ENCODE measurements at regions of chr9 and their contacts with region 1.

Region 1: GRCh38 chr9:99057665-99058625 is 47.0 kb upstream of the TGFBR1 start:
- DNase-seq: peak; percentile 41 to 91 (median 79)
- ATAC-seq: peak; percentile 67
- H3K4me3 ChIP-seq: peak overlapping the region; percentile 49
- H3K4me3 Mint-ChIP-seq: peak overlapping the region; percentile 85
- H3K27ac ChIP-seq: peak overlapping the region in 1 of 2 experiments; percentile 78
- H3K27ac Mint-ChIP-seq: peak overlapping the region; percentile 85
- H3K4me1 ChIP-seq: peaks cover 65% of the 10 kb centered on the region
- H3K4me1 Mint-ChIP-seq: peaks cover 85% of the 10 kb centered on the region
- H3K27me3 ChIP-seq: no peaks in the 10 kb centered on the region
- H3K27me3 Mint-ChIP-seq: no peaks in the 10 kb centered on the region
- CTCF ChIP-seq: no peak

Region 2: DNA sequence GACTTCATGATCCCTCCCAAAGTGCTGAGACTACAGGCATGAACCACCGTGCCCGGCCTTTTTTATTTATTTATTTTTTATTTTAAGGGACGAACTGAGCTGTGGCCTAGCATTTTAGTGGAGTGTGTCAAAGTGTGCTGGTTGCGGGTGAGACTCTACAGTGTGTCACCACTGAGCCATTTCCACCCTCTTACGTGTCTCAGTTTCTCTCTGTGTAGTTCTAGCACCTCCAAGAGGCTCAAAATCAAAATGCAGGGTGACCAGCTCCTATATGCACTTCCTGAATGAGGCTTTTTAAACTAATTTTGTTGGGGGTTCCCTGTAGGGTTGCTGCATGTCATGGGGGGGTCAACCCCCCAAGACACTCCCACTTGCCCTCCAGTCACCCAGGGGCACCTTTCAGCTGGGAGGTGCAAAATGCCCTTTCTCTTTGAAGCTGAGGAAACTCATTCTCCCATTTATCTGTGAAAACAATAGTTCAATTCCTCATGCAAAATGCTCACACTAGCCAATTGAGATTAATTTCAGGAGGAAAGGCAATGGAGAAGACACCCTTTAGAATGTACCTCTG is 44.9 kb before region 1 on chr9:
- CTCF ChIA-PET with region 1: interaction called, 9 read pairs
- POLR2A ChIA-PET with region 1: interaction called, 9 read pairs
- intact Hi-C with region 1: loop called in 1 of 2 experiments (anchors 5 kb)
- DNase-seq: peak in 4 of 9 experiments; percentile 25 to 68 (median 52)
- ATAC-seq: peak; percentile 73
- H3K4me3 ChIP-seq: peak overlapping the region in 1 of 2 experiments; percentile 24
- H3K4me3 Mint-ChIP-seq: peak overlapping the region; percentile 74
- H3K27ac ChIP-seq: peak overlapping the region; percentile 35 to 81
- H3K27ac Mint-ChIP-seq: peak overlapping the region; percentile 95
- H3K4me1 ChIP-seq: peaks cover 20% of the 10 kb centered on the region
- H3K4me1 Mint-ChIP-seq: peaks cover 32% of the 10 kb centered on the region
- H3K27me3 ChIP-seq: no peaks in the 10 kb centered on the region
- H3K27me3 Mint-ChIP-seq: no peaks in the 10 kb centered on the region
- CTCF ChIP-seq: peak; percentile 42

Region 3: GRCh38 chr9:99076483-99077171 is 18.7 kb after region 1 on chr9:
- CTCF ChIA-PET with region 1: interaction called, 3 read pairs
- POLR2A ChIA-PET with region 1: interaction called, 19 read pairs
- intact Hi-C with region 1: loop called (anchors 1 kb)
- DNase-seq: peak in 8 of 9 experiments; percentile 46 to 85 (median 64)
- ATAC-seq: peak; percentile 98
- H3K4me3 ChIP-seq: no peak overlapping the region
- H3K4me3 Mint-ChIP-seq: peak overlapping the region; percentile 33
- H3K27ac ChIP-seq: peak overlapping the region in 1 of 2 experiments; percentile 47
- H3K27ac Mint-ChIP-seq: peak overlapping the region; percentile 84
- H3K4me1 ChIP-seq: peaks cover 23% of the 10 kb centered on the region
- H3K4me1 Mint-ChIP-seq: peaks cover 54% of the 10 kb centered on the region
- H3K27me3 ChIP-seq: no peaks in the 10 kb centered on the region
- H3K27me3 Mint-ChIP-seq: no peaks in the 10 kb centered on the region
- CTCF ChIP-seq: no peak

Region 4: DNA sequence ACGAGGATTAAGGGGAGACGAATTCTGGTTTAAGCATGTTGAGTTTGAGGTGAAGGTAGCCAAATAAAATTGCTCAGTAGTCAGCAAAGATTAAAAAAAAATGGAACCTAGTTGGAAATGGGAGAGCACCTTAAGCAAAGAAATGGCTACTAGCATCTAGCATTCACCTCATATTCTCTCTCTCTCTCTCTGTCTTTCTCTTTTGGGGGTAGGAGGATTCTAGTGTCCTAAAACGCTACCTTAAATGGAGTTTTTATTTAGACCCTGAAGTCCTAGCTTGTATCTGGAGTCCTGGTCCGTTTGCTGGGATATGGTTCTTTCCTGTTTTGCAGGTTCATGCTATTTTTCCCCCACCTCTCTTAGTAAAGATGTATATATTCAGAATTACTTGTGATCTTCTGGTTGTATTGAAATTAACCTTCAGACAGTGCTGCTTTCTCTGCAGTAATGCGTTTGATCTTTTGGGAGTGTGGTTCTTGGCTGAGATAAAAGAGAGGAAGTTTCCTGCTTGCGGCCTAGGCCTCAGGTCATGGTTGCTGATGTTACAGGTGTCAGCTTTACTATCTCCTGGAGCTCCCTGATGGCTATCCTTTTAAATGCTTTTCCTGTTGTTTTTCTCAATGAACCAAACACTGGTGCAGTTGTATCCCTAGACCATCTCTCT is 54.9 kb after region 1 on chr9:
- CTCF ChIA-PET with region 1: interaction called, 3 read pairs
- POLR2A ChIA-PET with region 1: interaction called, 8 read pairs
- intact Hi-C with region 1: loop called (anchors 2 to 5 kb)
- DNase-seq: peak in 5 of 9 experiments; percentile 45 to 87 (median 69)
- ATAC-seq: peak; percentile 92
- H3K4me3 ChIP-seq: peak overlapping the region in 1 of 2 experiments; percentile 10
- H3K4me3 Mint-ChIP-seq: peak overlapping the region; percentile 66
- H3K27ac ChIP-seq: peak overlapping the region; percentile 6 to 41
- H3K27ac Mint-ChIP-seq: peak overlapping the region; percentile 88
- H3K4me1 ChIP-seq: peaks cover 85% of the 10 kb centered on the region
- H3K4me1 Mint-ChIP-seq: peaks cover 93% of the 10 kb centered on the region
- H3K27me3 ChIP-seq: no peaks in the 10 kb centered on the region
- H3K27me3 Mint-ChIP-seq: no peaks in the 10 kb centered on the region
- CTCF ChIP-seq: no peak

Region 5: DNA sequence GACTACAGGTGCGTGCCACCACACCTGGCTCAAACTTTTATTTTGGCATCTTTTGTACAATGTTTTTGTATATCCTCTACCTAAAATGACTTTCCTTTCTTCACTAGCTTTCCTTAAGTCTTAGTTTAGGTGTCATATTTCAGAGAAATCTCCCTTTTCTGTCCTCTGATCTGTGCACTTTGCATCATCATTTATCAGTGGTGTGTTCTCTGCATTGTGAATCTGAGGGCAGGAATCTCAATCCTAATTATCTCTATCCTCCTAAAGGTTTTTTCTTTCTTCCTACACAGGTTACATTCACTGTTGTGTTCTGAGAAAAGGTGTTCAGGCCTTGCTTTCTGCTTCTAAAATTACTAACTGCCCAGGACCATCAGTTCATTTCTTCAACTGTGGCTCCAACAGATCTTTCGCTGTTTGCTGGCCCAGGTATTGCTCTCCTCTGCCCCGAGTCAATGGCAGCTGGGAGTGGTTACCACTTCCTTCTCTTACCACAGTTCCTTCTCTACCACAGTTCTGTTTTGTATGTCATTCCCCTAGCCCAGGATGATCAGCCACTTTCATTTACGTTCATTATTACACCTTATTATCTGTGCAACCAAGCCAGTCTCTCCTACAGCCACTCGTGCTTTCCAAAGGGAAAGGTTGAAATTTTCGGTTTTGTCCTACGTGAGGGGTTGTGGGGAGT is 61.0 kb after region 1 on chr9:
- CTCF ChIA-PET with region 1: interaction called, 4 read pairs
- POLR2A ChIA-PET with region 1: interaction called, 4 read pairs
- intact Hi-C with region 1: loop called in 1 of 2 experiments (anchors 5 kb)
- DNase-seq: peak in 8 of 9 experiments; percentile 32 to 83 (median 62)
- ATAC-seq: peak; percentile 96
- H3K4me3 ChIP-seq: peak overlapping the region; percentile 15 to 36
- H3K4me3 Mint-ChIP-seq: peak overlapping the region; percentile 61
- H3K27ac ChIP-seq: peak overlapping the region; percentile 28 to 38
- H3K27ac Mint-ChIP-seq: peak overlapping the region; percentile 83
- H3K4me1 ChIP-seq: peaks cover 86% of the 10 kb centered on the region
- H3K4me1 Mint-ChIP-seq: peaks cover 91% of the 10 kb centered on the region
- H3K27me3 ChIP-seq: no peaks in the 10 kb centered on the region
- H3K27me3 Mint-ChIP-seq: no peaks in the 10 kb centered on the region
- CTCF ChIP-seq: no peak

Region 6: GRCh38 chr9:99130069-99130468 is 72.1 kb after region 1 on chr9:
- CTCF ChIA-PET with region 1: no interaction called
- POLR2A ChIA-PET with region 1: interaction called, 11 read pairs
- intact Hi-C with region 1: loop called in 1 of 2 experiments (anchors 1 kb)
- DNase-seq: no peak
- ATAC-seq: no peak
- H3K4me3 ChIP-seq: no peak overlapping the region
- H3K4me3 Mint-ChIP-seq: peak overlapping the region; percentile 38
- H3K27ac ChIP-seq: peak overlapping the region in 1 of 2 experiments; percentile 38
- H3K27ac Mint-ChIP-seq: peak overlapping the region; percentile 85
- H3K4me1 ChIP-seq: peaks cover 88% of the 10 kb centered on the region
- H3K4me1 Mint-ChIP-seq: peaks cover 86% of the 10 kb centered on the region
- H3K27me3 ChIP-seq: no peaks in the 10 kb centered on the region
- H3K27me3 Mint-ChIP-seq: no peaks in the 10 kb centered on the region
- CTCF ChIP-seq: no peak